Activated T-helper 1 cell treated with anti-CD3 and anti-CD28 coated beads, Interleukin-12 subunit alpha, Interleukin-12 subunit beta, Interleukin-2, Interleukin-4 antibody, amounts not matched to agents 30 ng/mL and 10 ng/mL and 1 ng/mL, durations not matched to agents 14 hours and 24 hours and 36 hours (primary cell): ENCODE measurements at regions of chr4 and their contacts with region 1.

Region 1: DNA sequence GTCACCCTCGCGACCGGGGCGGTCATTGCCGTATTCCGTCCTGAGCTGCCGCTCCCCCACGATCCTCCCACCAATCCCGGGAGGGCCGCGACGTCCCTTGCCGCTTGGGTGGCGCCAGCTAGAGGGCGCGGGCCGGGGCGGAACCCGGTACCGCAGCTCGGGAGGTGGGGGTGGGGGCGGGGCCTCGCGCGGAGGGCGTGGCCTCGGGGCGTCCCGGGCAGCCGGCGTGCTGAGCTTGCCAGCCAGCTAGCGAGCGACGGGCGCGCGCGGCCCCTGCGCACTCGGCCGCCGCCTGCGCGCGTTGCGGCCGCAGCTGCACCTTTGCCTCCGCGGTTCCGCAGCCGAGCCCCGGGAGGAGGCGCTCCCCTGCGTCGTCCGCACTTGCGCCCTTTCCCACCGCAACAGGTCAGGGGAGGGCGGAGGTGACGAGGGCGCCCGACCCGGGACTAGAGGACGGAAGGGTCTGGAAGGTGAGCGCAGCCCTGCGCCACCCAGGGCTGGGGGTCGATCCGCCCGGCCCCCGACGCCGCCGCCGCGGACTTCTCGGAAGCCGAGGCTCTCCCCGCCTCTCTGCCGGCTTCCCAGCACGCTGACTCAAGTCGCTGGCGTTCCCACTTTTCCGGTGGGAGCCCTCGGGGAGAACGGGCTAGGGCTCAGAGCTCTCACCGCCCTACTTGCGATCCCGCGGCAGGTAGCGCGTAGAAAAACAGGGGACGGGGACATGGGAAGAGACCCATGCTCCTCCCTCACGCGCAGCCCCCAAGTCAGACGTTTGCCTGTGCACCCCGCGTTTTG is at the start of gene AFF1:
- DNase-seq: peak; percentile 86
- H3K4me3 Mint-ChIP-seq: peak within 1 kb of the TSS; percentile 89
- H3K27ac Mint-ChIP-seq: peak within 1 kb of the TSS; percentile 97
- H3K4me1 Mint-ChIP-seq: peaks cover 48% of the 10 kb centered on the region
- H3K27me3 Mint-ChIP-seq: no peaks in the 10 kb centered on the region
- total RNA-seq, gene AFF1: 44.7 and 47.0 TPM in 2 replicates

Region 2: DNA sequence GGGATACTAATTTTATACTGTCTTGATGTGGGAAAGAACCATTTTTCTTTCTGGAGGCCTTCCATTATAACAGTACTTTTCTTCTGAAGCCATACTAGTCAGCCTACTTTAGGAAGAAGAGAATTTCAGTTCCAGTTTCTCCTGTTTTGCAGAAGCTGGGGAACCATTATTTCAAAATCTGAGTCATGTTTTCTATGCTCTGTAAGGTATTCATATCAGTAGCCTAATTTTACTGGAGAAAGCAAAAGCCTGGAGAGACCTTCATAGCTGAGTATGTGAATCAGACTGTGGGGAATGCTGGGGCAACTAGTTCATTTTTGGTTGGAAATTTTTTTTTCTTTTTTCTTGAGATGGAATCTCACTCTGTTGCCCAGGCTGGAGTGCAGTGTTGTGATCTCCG is 22.2 kb after region 1 on chr4:
- intact Hi-C with region 1: loop called (anchors 1 kb)
- DNase-seq: no peak
- H3K4me3 Mint-ChIP-seq: no peak overlapping the region
- H3K27ac Mint-ChIP-seq: peak overlapping the region; percentile 75
- H3K4me1 Mint-ChIP-seq: peaks cover 31% of the 10 kb centered on the region
- H3K27me3 Mint-ChIP-seq: no peaks in the 10 kb centered on the region

Region 3: GRCh38 chr4:87073199-87074120 is 138.5 kb after region 1 on chr4:
- intact Hi-C with region 1: loop called (anchors 1 kb)
- DNase-seq: peak; percentile 20
- H3K4me3 Mint-ChIP-seq: peak overlapping the region; percentile 77
- H3K27ac Mint-ChIP-seq: peak overlapping the region; percentile 78
- H3K4me1 Mint-ChIP-seq: peaks cover 37% of the 10 kb centered on the region
- H3K27me3 Mint-ChIP-seq: no peaks in the 10 kb centered on the region

Region 4: GRCh38 chr4:87235020-87235671 is 300.2 kb after region 1 on chr4:
- intact Hi-C with region 1: loop called (anchors 2 kb)
- DNase-seq: no peak
- H3K4me3 Mint-ChIP-seq: no peak overlapping the region
- H3K27ac Mint-ChIP-seq: no peak overlapping the region
- H3K4me1 Mint-ChIP-seq: peaks cover 7% of the 10 kb centered on the region
- H3K27me3 Mint-ChIP-seq: peaks cover 14% of the 10 kb centered on the region

Region 5: GRCh38 chr4:88284439-88285234 is 1349.7 kb after region 1 on chr4 and contains the start of gene PPM1K:
- intact Hi-C with region 1: loop called (anchors 5 kb)
- DNase-seq: peak; percentile 99
- H3K4me3 Mint-ChIP-seq: peak within 1 kb of the TSS; percentile 99
- H3K27ac Mint-ChIP-seq: peak within 1 kb of the TSS; percentile 99
- H3K4me1 Mint-ChIP-seq: peaks cover 47% of the 10 kb centered on the region
- H3K27me3 Mint-ChIP-seq: no peaks in the 10 kb centered on the region
- total RNA-seq, gene PPM1K: 37.3 and 39.5 TPM in 2 replicates